OCI-LY7 (cell line): ENCODE measurements at regions of chr18 and their contacts with region 1.

Region 1: GRCh38 chr18:2597639-2598038 is 26.3 kb downstream of the NDC80 start:
- DNase-seq: no peak
- H3K4me3 ChIP-seq: no peak overlapping the region
- H3K27ac ChIP-seq: no peak overlapping the region
- H3K4me1 ChIP-seq: no peaks in the 10 kb centered on the region
- CTCF ChIP-seq: no peak

Region 2: GRCh38 chr18:2697184-2697583 is 99.5 kb after region 1 on chr18:
- CTCF ChIA-PET with region 1: no interaction called
- POLR2A ChIA-PET with region 1: no interaction called
- intact Hi-C with region 1: loop called (anchors 5 kb)
- DNase-seq: no peak
- H3K4me3 ChIP-seq: no peak overlapping the region
- H3K27ac ChIP-seq: no peak overlapping the region
- H3K4me1 ChIP-seq: no peaks in the 10 kb centered on the region
- CTCF ChIP-seq: no peak

Region 3: DNA sequence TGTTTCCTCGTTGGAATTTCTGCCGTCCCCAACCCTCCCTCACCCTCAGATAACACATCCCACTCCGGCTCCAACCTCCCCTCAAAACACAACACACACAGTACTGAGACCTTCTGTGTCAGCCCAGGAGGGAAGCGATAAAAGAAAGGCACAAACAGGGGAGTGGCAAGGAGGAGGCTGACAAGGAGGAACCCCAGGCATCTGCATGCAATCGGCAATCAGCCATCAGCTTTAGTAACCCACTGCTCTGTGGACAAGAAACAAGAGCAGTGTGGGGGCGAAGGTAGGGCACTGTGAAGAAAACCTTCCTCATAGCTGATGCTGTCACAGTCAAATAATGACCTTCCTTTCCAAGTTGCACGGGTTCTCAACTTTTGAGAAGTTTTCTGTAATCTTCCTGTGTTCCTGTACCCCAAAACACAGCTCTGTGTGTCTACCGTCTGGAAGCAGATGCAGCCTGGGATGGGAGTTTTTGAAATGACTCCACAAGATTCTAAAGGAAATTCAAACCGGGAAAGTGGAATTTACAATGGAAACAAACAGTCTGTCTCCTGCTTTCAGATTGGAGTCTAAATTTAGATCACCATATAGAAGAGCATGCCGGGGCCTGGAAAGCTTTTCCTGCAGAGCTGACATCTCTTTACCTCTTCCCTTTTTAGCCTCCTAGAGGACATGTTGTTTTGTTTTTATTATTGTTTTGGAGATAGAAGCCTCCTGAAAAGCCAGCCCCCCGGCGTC is 431.7 kb after region 1 on chr18:
- CTCF ChIA-PET with region 1: no interaction called
- POLR2A ChIA-PET with region 1: no interaction called
- intact Hi-C with region 1: no loop called
- DNase-seq: no peak
- H3K4me3 ChIP-seq: no peak overlapping the region
- H3K27ac ChIP-seq: no peak overlapping the region
- H3K4me1 ChIP-seq: no peaks in the 10 kb centered on the region
- CTCF ChIP-seq: no peak